Activated B cell treated with CpG ODN at 0.5 μM for 24 hours (primary cell): ENCODE measurements at regions of chr3 and their contacts with region 1.

Region 1: DNA sequence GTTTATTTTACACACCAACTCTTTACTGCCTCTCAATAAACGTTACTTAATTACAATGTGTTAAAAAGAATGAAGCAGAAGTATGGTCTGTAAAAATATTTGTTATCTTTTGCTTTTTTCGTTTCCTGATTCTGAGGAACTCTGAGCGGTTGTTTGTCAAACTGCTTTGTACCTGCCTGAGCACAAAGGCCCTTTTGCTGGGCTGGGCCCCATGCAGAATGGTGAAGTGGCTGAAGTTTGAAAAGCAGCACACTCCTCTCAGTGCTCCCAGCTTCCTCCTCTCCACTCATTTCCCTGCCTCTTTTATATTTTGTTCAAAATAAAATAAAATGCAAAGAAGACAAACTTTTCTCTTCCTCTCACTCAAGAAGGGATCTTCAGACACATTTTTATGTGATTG is 229.5 kb downstream of the NFKBIZ start:
- DNase-seq: no peak
- ATAC-seq: peak; percentile 49
- H3K4me3 Mint-ChIP-seq: no peak overlapping the region
- H3K27ac Mint-ChIP-seq: peak overlapping the region; percentile 87
- H3K4me1 Mint-ChIP-seq: peaks cover 37% of the 10 kb centered on the region
- H3K27me3 Mint-ChIP-seq: no peaks in the 10 kb centered on the region
- CTCF ChIP-seq: no peak

Region 2: DNA sequence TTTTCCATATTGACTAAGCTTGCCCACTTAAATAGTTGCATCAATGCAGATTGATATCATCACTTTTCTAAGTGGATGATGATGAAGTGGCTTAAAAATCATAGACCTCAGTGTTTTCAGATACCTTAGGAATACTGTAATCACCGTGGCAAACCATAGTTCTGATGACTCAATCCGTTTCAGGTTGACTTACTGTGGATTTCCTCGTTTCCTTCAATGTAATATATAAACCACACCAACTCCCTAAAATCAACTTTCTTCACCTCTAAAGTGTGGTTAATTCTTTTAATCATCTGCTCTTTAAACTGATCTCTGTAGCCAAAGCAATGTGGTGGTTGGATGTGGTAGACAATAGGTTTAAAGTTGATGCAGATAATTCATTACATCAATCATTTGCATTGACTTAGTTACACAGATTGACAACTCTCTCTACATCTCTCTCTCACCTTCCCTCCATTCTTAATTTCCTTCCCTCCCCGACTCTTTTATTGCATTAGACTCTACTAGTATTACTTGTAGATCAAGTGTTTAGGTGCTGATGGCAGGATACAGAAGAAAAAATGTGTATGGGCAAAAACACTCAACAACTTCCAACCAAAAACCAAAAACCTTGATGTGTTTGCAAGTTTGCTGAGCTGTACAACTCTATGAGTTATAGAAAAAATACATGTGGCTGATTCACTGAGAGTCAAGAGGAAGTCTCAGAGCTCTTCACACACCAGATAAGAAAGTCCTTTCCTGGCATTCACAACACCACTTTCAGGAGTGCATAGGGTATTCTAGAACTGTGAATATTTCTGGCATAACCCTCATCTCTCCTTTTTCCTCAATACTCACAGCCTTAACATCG is 14.0 kb after region 1 on chr3:
- CTCF ChIA-PET with region 1: no interaction called
- POLR2A ChIA-PET with region 1: no interaction called
- intact Hi-C with region 1: loop called (anchors 1 kb)
- DNase-seq: no peak
- ATAC-seq: no peak
- H3K4me3 Mint-ChIP-seq: no peak overlapping the region
- H3K27ac Mint-ChIP-seq: peak overlapping the region; percentile 3
- H3K4me1 Mint-ChIP-seq: peaks cover 15% of the 10 kb centered on the region
- H3K27me3 Mint-ChIP-seq: no peaks in the 10 kb centered on the region
- CTCF ChIP-seq: no peak

Region 3: GRCh38 chr3:102224128-102224527 is 145.3 kb after region 1 on chr3:
- CTCF ChIA-PET with region 1: interaction called, 4 read pairs
- POLR2A ChIA-PET with region 1: no interaction called
- intact Hi-C with region 1: loop called (anchors 5 kb)
- DNase-seq: no peak
- ATAC-seq: peak; percentile 72
- H3K4me3 Mint-ChIP-seq: no peak overlapping the region
- H3K27ac Mint-ChIP-seq: peak overlapping the region; percentile 36
- H3K4me1 Mint-ChIP-seq: peaks cover 44% of the 10 kb centered on the region
- H3K27me3 Mint-ChIP-seq: no peaks in the 10 kb centered on the region
- CTCF ChIP-seq: no peak